ENCODE measurements at regions of chr22 and their contacts with region 1.

Region 1: GRCh38 chr22:19066531-19067271 is 55.5 kb downstream of the DGCR2 start:
- DNase-seq: no peak
- ATAC-seq: no peak; the same call in 2 of the 3 replicates
- H3K4me3 ChIP-seq: no peak overlapping the region
- H3K27ac ChIP-seq: no peak overlapping the region
- H3K4me1 ChIP-seq: peaks cover 0 to 19% of the 10 kb centered on the region in 2 experiments; a peak in 1 of 5 replicates
- H3K27me3 ChIP-seq: no peaks in the 10 kb centered on the region
- CTCF ChIP-seq: no peak
- EP300 ChIP-seq: no peak
- POLR2A ChIP-seq: no peak
- RAD21 ChIP-seq: no peak

Region 2: DNA sequence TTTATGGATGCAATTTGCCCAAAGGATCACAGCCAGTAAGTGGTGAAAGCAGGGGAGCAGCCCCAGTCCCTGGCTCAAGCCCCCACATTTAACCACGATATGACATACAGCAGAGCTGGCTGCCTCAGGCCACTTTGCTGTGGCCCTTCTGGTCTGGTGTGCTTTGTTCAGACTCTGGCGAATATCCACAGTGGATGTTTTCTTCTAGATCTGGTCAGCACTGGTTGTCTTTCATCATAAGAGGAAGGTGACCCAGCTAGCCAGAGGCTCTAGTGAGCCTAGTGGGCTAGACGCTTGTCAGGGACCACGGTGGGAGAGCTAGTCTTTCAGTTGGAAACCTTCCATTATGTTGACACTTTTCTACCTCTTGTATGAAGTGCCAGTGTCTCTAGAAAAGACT is 13.0 kb after region 1 on chr22:
- CTCF ChIA-PET with region 1: no interaction called
- POLR2A ChIA-PET with region 1: interaction called, 19 read pairs
- in situ Hi-C with region 1: no loop called
- intact Hi-C with region 1: no loop called
- DNase-seq: no peak
- ATAC-seq: no peak
- H3K4me3 ChIP-seq: no peak overlapping the region
- H3K27ac ChIP-seq: no peak overlapping the region
- H3K4me1 ChIP-seq: no peaks in the 10 kb centered on the region
- H3K27me3 ChIP-seq: no peaks in the 10 kb centered on the region
- CTCF ChIP-seq: no peak
- EP300 ChIP-seq: no peak
- POLR2A ChIP-seq: no peak
- RAD21 ChIP-seq: no peak

Region 3: DNA sequence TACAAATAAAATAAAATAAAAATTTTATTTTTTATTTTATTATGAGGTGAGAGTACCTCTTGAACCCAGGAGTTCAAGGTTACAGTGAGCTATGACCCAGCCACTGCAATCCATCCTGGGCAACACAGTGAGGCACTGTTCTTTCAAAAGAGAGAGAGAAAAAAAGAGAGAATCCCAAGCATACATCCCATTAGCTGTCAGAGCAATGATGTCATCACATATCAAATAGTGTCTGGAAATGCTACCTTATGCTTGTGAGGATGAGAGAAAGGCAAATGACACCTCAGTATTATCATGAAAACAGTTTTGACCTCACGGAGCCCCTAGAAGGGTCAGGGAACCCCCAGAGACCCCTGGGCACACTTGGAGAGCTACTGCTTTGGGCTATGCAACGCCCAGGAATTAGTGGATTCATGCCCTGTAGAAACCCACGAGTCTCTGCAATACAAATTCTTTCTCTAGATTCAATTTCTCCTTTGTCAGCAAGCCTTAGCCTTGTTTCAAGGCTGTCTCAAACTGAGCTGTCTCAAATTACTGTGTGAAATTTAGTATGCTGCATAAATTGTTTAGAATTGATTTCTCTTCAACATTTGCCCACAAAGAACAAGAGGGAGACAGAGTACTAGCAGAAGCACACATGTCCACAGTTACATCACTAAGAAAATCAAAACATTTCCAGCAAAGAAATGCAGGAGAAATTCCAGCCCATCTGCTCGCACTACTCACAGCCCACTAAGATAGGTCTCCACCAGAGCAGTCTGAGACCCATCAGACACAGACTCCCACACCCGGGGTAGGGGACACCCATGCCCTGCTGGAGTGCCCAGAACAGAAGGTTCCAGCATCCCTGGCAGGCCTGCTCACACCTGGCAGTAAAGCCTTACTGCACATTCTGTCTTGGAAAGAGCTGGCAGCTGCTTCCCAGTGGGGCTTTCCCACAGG is 37.5 kb after region 1 on chr22:
- CTCF ChIA-PET with region 1: no interaction called
- POLR2A ChIA-PET with region 1: no interaction called
- in situ Hi-C with region 1: no loop called
- intact Hi-C with region 1: no loop called
- DNase-seq: peak in 2 of 4 experiments; percentile 22 to 51
- ATAC-seq: peak; percentile 8; the same call in 1 of the 3 replicates
- H3K4me3 ChIP-seq: no peak overlapping the region
- H3K27ac ChIP-seq: no peak overlapping the region
- H3K4me1 ChIP-seq: peaks cover 18 to 19% of the 10 kb centered on the region in 2 experiments
- H3K27me3 ChIP-seq: no peaks in the 10 kb centered on the region
- CTCF ChIP-seq: peak; percentile 10 to 30 (median 16); a peak in 3 of 6 replicates
- EP300 ChIP-seq: no peak
- POLR2A ChIP-seq: no peak
- RAD21 ChIP-seq: no peak

Region 4: GRCh38 chr22:19130959-19131684 is 64.4 kb after region 1 on chr22 and contains the start of gene TSSK2:
- CTCF ChIA-PET with region 1: no interaction called
- POLR2A ChIA-PET with region 1: interaction called, 3 read pairs
- in situ Hi-C with region 1: no loop called
- intact Hi-C with region 1: loop called (anchors 10 kb)
- DNase-seq: no peak
- ATAC-seq: no peak
- H3K4me3 ChIP-seq: no peak within 1 kb of the TSS
- H3K27ac ChIP-seq: no peak within 1 kb of the TSS
- H3K4me1 ChIP-seq: peaks cover 0 to 45% of the 10 kb centered on the region in 2 experiments; a peak in 2 of 5 replicates
- H3K27me3 ChIP-seq: peaks cover 3 to 11% of the 10 kb centered on the region in 2 experiments; a peak in 4 of 5 replicates
- CTCF ChIP-seq: 0 out of 6 replicates have a peak, but pooled peaks of 1 of the 3 experiments have one; percentile 2
- EP300 ChIP-seq: no peak
- POLR2A ChIP-seq: no peak
- RAD21 ChIP-seq: no peak
- polyA plus RNA-seq, gene TSSK2: not detected

Region 5: DNA sequence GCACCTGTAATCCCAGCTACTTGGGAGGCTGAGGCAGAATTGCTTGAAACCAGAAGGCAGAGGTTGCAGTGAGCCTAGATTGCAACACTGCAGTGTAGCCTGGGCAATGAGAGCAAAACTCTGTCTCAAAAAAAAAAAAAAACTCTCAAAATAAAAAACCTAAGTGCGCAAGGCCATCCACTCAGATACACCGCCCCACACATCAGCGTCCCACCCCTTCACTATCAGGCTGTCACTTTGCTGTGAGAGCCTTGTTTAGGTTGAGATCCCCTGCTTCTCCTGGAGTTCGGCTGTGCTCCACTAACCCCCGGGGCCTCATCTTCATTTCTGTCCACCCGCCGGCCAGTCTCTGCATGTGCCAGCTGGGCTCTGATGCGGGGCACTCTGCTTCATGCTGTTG is 99.7 kb after region 1 on chr22:
- CTCF ChIA-PET with region 1: no interaction called
- POLR2A ChIA-PET with region 1: no interaction called
- in situ Hi-C with region 1: no loop called
- intact Hi-C with region 1: no loop called
- DNase-seq: no peak
- ATAC-seq: no peak
- H3K4me3 ChIP-seq: no peak overlapping the region
- H3K27ac ChIP-seq: no peak overlapping the region
- H3K4me1 ChIP-seq: peaks cover 18 to 32% of the 10 kb centered on the region in 2 experiments
- H3K27me3 ChIP-seq: peaks cover 33 to 58% of the 10 kb centered on the region in 2 experiments
- CTCF ChIP-seq: no peak
- EP300 ChIP-seq: no peak
- POLR2A ChIP-seq: no peak
- RAD21 ChIP-seq: no peak

Measured in K562 (cell line).